Gastrocnemius medialis (tissue), 4 donors: ENCODE measurements at regions of chrX and their contacts with region 1.

Region 1: DNA sequence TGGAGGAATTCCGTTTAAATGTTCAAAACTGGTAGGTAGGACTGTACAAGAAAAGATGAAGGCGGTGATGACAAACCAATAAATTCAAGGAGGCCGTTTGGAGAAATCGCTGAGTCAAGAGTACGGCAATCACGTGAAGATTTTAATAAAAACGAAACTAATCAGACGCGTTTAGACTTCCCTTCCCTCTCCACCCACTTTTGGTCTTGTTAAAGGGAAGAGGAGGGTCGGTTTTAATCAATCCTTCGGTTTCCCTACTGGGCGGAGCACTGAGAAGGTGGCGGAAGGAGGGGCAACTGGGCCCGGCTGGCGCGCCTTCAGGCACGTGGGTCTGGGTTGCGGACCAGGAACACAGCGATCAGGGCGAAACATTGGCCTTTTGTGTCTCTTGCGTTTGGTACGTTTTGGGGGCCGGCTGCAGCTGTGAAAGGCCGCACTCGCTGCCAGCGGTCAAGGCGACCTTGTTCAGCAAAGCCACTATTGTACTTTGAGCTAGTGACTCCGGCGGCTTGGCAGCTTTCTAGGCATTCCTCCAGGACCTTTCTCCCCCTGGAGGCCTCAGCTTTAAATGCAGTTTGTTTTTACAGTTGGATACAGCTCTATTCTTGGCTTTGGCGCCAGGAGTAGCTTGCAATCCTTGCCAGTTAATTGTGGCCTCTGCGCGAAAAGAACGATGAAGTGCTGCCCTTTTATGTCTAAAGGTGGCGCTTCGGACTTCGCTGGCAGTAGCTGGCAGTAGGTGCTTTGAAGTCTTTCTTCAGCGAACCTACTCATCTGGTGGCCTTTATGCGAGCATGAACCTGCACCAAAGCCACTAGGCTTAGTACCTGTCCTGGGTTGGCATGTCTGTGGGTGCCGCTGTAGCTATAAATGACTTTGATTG is 16.8 kb upstream of the LAMP2 start:
- DNase-seq: peak; percentile 56 to 81
- ATAC-seq: peak; percentile 97 to 99
- H3K4me3 ChIP-seq: peak overlapping the region; percentile 48 to 62 (median 60)
- H3K27ac ChIP-seq: peak overlapping the region; percentile 83 to 93 (median 86)
- H3K4me1 ChIP-seq: peaks cover 0 to 3% of the 10 kb centered on the region in 2 donors
- H3K27me3 ChIP-seq: no peaks in the 10 kb centered on the region
- CTCF ChIP-seq: peak; percentile 44 to 66 (median 58)
- POLR2A ChIP-seq: peak; percentile 8 to 15

Region 2: DNA sequence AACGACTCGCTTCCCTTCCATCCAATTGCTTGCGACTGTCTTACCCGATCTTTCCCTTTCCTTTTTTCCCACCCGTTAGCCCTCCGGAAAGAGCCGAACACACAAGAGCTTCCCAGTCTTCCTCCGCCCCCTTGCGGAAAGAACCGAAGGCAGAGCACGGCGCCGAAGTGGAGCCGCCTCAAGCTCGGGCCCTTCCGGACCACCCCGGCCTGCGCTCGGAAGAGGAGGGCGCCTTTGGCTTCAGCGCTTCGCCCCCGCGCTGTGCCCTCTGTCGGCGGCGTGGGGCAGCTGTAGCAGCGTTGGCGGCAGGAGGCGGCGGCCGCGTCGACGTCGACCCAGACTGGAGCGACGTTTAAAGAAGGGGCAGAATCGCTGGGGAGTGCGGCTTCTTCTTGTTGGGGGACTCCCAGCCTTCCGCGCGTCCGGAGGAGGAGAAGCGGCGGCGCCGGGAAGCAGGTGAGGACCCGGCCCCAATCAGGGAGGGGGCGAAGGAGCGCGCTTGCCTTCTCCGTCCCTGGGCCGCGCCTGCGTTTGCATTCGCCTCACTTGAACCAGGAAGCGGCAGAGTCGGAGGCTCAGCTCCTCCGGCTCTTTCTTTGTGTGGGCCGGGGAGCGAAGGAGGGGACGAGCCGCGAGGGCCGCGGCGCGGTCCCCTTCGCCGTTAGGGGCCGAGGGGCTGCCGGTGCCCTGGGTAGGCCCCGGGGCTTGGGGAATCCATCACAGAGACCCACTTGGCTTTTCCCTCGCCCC is 235.2 kb before region 1 on chrX and contains the start of gene ZBTB33:
- in situ Hi-C with region 1: no loop called
- intact Hi-C with region 1: loop called (anchors 5 kb)
- DNase-seq: peak; percentile 80 to 89
- ATAC-seq: peak; percentile 95 to 96
- H3K4me3 ChIP-seq: peak within 1 kb of the TSS; percentile 66 to 83 (median 81)
- H3K27ac ChIP-seq: peak within 1 kb of the TSS; percentile 89 to 94 (median 91)
- H3K4me1 ChIP-seq: peaks cover 0 to 5% of the 10 kb centered on the region in 2 donors
- H3K27me3 ChIP-seq: no peaks in the 10 kb centered on the region
- CTCF ChIP-seq: peak; percentile 60 to 74 (median 62)
- POLR2A ChIP-seq: peak; percentile 58 to 65
- total RNA-seq, gene ZBTB33: 9.2 to 12.4 (median 9.8) TPM

Region 3: GRCh38 chrX:120468825-120469525 is 16.9 kb before region 1 on chrX and contains the start of gene LAMP2:
- in situ Hi-C with region 1: no loop called
- intact Hi-C with region 1: loop called (anchors 2 kb)
- DNase-seq: peak; percentile 89 to 93
- ATAC-seq: peak; percentile 95 to 99
- H3K4me3 ChIP-seq: peak within 1 kb of the TSS; percentile 63 to 82 (median 76)
- H3K27ac ChIP-seq: peak within 1 kb of the TSS; percentile 95 to 97 (median 95)
- H3K4me1 ChIP-seq: peaks cover 9 to 25% of the 10 kb centered on the region in 2 donors
- H3K27me3 ChIP-seq: no peaks in the 10 kb centered on the region
- CTCF ChIP-seq: no peak
- POLR2A ChIP-seq: peak; percentile 86 to 91
- total RNA-seq, gene LAMP2: 70.0 to 112 (median 110) TPM

Region 4: DNA sequence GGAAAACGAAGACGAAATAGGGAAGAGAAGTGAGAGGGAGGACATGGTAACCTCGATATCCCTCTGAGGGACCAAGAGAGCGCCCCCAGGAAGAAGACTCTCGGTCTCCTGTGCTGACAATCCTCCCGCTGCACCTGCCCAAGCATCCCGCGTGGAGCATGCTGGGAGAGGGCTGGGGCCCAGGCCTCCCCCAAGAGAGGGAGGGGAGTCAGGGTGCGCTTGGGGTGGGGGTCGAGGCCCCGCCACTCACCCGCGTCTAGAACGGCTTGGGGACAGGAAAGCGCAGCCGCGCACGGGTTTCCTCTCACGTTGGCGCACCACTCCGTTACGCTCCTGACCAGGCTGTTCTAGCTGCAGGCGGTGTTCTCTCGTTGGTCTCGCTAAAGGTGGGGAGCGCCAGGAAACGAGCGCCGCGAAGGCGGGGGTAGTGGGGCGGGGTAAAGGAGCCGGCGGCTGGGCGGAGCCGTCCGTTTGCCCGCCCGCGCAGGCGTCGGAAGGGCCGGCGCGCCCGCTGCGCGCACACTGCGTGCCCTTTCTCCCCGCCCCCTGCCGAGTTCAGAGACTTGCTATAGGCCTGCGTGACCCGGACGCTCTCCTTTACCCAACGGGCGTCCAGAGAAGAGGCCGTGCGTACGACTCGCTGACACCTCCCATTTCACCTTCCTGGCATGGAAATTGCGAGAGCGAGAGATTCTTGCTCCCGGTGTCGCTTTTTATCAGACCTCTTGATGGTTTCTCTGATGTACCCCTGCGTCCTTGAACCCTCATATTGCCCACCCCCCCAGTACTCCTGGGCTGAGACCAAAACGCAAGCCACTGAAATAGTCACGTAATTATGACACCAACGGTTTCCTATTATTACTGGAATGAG is 144.0 kb after region 1 on chrX and contains the start of gene C1GALT1C1:
- in situ Hi-C with region 1: no loop called
- intact Hi-C with region 1: loop called (anchors 10 kb)
- DNase-seq: peak; percentile 87 to 93
- ATAC-seq: peak; percentile 97 to 98
- H3K4me3 ChIP-seq: peak within 1 kb of the TSS; percentile 64 to 76 (median 70)
- H3K27ac ChIP-seq: peak within 1 kb of the TSS; percentile 88 to 94 (median 91)
- H3K4me1 ChIP-seq: no peaks in the 10 kb centered on the region
- H3K27me3 ChIP-seq: no peaks in the 10 kb centered on the region
- CTCF ChIP-seq: no peak
- POLR2A ChIP-seq: peak; percentile 59 to 68
- total RNA-seq, gene C1GALT1C1: 6.5 to 13.5 (median 10.2) TPM